ENCODE measurements at regions of chr1 and their contacts with region 1.

Region 1: GRCh38 chr1:45521398-45522323 is at the start of gene PRDX1:
- DNase-seq: peak; percentile 96
- ATAC-seq: peak; percentile 91
- H3K4me3 Mint-ChIP-seq: peak within 1 kb of the TSS; percentile 96
- H3K27ac Mint-ChIP-seq: peak within 1 kb of the TSS; percentile 87
- H3K4me1 Mint-ChIP-seq: peaks cover 34% of the 10 kb centered on the region
- H3K27me3 Mint-ChIP-seq: peaks cover 9% of the 10 kb centered on the region
- total RNA-seq, gene PRDX1: 250 to 251 TPM

Region 2: GRCh38 chr1:45339789-45340570 is 181.7 kb before region 1 on chr1 and contains the starts of genes MUTYH and TOE1:
- CTCF ChIA-PET with region 1: no interaction called
- POLR2A ChIA-PET with region 1: interaction called, 24 read pairs
- DNase-seq: peak; percentile 97
- ATAC-seq: peak; percentile 91
- H3K4me3 Mint-ChIP-seq: peak within 1 kb of the TSS; percentile 100
- H3K27ac Mint-ChIP-seq: peak within 1 kb of the TSS; percentile 100
- H3K4me1 Mint-ChIP-seq: peaks cover 53% of the 10 kb centered on the region
- H3K27me3 Mint-ChIP-seq: no peaks in the 10 kb centered on the region
- total RNA-seq, gene MUTYH: 59.8 to 61.8 TPM
- total RNA-seq, gene TOE1: 25.4 to 25.9 TPM

Region 3: DNA sequence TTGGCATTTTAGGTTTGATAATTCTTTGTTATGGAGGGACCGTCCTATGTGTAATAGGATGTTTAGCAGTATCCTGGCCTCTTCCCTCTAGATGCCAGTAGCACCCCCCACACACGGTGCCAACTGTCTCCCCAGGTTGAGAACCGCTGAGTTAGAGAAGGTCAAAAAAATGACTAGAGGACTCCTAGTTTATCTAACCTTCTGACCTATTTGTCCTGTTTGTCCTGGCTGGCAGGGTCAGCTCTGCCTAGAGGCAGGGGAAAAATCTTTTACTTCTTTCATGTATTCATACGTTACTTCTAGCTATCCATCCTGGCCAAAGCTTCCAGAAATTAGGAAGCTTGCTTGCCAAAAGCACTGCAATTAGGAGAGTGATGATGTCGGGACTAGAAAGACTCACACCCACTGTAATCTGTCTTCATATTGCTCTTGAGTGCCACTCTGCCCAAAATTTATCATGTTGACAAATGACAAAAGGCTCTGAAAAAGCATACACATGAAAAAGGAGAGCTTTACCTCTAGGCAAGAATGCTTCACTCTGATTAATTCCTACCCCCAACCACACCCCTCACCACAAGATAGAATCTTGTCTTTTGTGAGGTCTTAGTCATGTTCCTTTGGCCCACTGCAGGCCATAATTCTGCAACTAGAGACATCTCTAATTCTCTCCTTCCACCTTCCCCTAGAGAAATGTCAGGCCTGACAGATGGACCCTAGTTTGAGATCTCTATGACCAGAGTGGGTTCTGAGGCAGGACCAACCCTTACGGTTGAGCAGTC is 14.5 kb after region 1 on chr1:
- CTCF ChIA-PET with region 1: interaction called, 3 read pairs
- POLR2A ChIA-PET with region 1: interaction called, 19 read pairs
- DNase-seq: no peak
- ATAC-seq: peak; percentile 23
- H3K4me3 Mint-ChIP-seq: no peak overlapping the region
- H3K27ac Mint-ChIP-seq: no peak overlapping the region
- H3K4me1 Mint-ChIP-seq: peaks cover 8% of the 10 kb centered on the region
- H3K27me3 Mint-ChIP-seq: peaks cover 9% of the 10 kb centered on the region

Region 4: GRCh38 chr1:45550401-45551351 is 29.0 kb after region 1 on chr1 and contains the start of gene AKR1A1:
- CTCF ChIA-PET with region 1: interaction called, 13 read pairs
- POLR2A ChIA-PET with region 1: interaction called, 55 read pairs
- DNase-seq: peak; percentile 90
- ATAC-seq: peak; percentile 96
- H3K4me3 Mint-ChIP-seq: peak within 1 kb of the TSS; percentile 94
- H3K27ac Mint-ChIP-seq: peak within 1 kb of the TSS; percentile 91
- H3K4me1 Mint-ChIP-seq: peaks cover 25% of the 10 kb centered on the region
- H3K27me3 Mint-ChIP-seq: no peaks in the 10 kb centered on the region
- total RNA-seq, gene AKR1A1: 150 to 152 TPM

Region 5: DNA sequence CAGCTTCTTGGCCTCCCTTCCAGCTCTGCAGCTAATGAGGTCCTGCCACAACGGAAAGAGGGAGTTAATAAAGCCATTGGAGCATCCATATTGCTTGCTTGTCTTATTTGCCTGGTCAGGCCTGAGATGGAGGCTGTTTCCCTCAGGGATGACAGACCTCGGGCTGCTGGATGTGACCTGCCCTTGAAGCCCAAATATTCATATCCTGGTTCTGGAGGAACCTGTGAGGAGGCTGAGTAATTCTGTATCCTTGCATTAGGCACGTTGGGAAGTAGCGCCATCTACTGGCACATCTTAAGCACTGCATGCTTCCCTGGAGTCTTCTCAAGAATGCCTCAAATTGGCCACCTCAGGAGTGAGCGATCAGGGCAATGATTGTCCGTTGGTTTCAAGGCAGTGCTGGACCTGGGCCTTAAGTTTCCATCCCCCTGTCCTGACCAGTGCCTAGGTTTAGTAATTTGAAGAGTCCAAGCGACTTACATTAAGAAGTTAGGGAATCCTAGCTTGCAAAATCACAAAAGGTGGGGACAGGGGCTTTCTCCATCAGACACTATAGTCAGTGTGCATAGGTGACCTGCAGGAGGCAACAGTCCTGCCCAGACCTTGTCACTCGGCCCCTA is 48.4 kb after region 1 on chr1:
- CTCF ChIA-PET with region 1: interaction called, 70 read pairs
- POLR2A ChIA-PET with region 1: interaction called, 39 read pairs
- DNase-seq: peak; percentile 83
- ATAC-seq: peak; percentile 90
- H3K4me3 Mint-ChIP-seq: no peak overlapping the region
- H3K27ac Mint-ChIP-seq: no peak overlapping the region
- H3K4me1 Mint-ChIP-seq: no peaks in the 10 kb centered on the region
- H3K27me3 Mint-ChIP-seq: no peaks in the 10 kb centered on the region

Region 6: GRCh38 chr1:45686317-45687013 is 164.8 kb after region 1 on chr1 and contains the start of gene GPBP1L1:
- CTCF ChIA-PET with region 1: no interaction called
- POLR2A ChIA-PET with region 1: interaction called, 14 read pairs
- DNase-seq: peak; percentile 98
- ATAC-seq: peak; percentile 73
- H3K4me3 Mint-ChIP-seq: peak within 1 kb of the TSS; percentile 99
- H3K27ac Mint-ChIP-seq: peak within 1 kb of the TSS; percentile 99
- H3K4me1 Mint-ChIP-seq: peaks cover 34% of the 10 kb centered on the region
- H3K27me3 Mint-ChIP-seq: no peaks in the 10 kb centered on the region
- total RNA-seq, gene GPBP1L1: 103 to 105 TPM